ENCODE measurements at regions of chr14 and their contacts with region 1.

Region 1: DNA sequence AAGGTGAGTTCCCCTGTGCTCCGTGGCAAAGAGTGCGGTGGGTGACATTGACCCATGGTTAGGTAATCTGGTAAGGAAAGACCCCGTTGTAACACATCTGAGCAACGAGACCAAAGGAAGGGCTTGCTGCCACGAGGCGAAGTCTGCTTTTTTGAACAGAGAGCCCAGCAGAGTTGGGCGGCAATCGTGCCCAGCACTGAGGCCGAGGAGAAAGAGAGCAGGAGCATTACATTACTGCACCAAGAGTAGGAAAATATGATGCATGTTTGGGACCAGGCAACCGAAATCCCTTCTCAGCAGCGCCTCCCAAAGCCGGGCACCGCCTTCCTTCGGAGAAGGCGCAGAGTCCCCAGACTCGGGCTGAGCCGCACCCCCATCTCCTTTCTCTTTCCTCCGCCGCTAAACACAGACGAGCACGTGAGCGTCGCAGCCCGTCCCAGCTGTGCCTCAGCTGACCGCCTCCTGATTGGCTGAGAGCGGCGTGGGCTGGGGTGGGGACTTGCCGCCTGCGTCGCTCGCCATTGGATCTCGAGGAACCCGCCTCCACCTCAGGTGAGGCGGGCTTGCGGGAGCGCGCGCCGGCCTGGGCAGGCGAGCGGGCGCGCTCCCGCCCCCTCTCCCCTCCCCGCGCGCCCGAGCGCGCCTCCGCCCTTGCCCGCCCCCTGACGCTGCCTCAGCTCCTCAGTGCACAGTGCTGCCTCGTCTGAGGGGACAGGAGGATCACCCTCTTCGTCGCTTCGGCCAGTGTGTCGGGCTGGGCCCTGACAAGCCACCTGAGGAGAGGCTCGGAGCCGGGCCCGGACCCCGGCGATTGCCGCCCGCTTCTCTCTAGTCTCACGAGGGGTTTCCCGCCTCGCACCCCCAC is at the start of gene HIF1A:
- H3K4me3 Mint-ChIP-seq: peak within 1 kb of the TSS; percentile 97
- H3K27ac Mint-ChIP-seq: peak within 1 kb of the TSS; percentile 97
- H3K4me1 Mint-ChIP-seq: peaks cover 22% of the 10 kb centered on the region
- H3K27me3 Mint-ChIP-seq: peaks cover 1% of the 10 kb centered on the region

Region 2: DNA sequence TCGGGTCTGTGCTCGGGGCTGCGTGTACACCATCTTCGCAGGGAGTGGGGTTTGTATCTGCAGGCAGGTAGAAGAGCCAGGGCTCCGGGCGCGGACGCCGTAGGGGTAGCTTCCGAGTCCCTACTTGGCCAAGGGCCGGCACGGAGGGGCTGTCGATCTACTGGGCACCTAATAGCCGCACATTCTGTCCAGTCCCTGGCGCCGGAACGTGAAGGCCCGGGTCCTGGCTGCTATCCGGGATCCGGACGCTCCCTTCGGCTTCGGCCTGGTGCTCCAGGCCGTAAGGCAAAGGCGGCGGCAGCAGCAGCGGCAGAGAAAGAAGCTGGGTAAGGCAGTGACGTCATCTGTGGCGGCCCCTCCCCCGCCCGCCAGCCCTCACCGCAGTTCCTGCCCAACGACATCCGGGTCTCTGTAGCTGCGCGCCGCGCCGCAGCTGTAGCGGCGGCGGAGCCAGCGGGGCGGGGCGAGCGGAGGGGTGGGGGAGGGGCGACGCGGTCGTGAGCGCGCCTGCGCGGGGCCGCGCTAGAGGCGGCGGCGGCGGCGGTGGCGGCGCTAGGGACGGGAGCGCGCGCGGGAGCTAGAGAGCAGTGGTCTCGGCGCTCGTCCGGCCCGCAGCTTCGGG is 1446.3 kb before region 1 on chr14 and contains the start of gene PPM1A:
- intact Hi-C with region 1: loop called (anchors 5 kb)
- H3K4me3 Mint-ChIP-seq: peak within 1 kb of the TSS; percentile 92
- H3K27ac Mint-ChIP-seq: peak within 1 kb of the TSS; percentile 99
- H3K4me1 Mint-ChIP-seq: peaks cover 48% of the 10 kb centered on the region
- H3K27me3 Mint-ChIP-seq: no peaks in the 10 kb centered on the region

Region 3: GRCh38 chr14:61537563-61538463 is 157.2 kb before region 1 on chr14:
- intact Hi-C with region 1: no loop called
- H3K4me3 Mint-ChIP-seq: no peak overlapping the region
- H3K27ac Mint-ChIP-seq: peak overlapping the region; percentile 51
- H3K4me1 Mint-ChIP-seq: peaks cover 20% of the 10 kb centered on the region
- H3K27me3 Mint-ChIP-seq: no peaks in the 10 kb centered on the region

Region 4: DNA sequence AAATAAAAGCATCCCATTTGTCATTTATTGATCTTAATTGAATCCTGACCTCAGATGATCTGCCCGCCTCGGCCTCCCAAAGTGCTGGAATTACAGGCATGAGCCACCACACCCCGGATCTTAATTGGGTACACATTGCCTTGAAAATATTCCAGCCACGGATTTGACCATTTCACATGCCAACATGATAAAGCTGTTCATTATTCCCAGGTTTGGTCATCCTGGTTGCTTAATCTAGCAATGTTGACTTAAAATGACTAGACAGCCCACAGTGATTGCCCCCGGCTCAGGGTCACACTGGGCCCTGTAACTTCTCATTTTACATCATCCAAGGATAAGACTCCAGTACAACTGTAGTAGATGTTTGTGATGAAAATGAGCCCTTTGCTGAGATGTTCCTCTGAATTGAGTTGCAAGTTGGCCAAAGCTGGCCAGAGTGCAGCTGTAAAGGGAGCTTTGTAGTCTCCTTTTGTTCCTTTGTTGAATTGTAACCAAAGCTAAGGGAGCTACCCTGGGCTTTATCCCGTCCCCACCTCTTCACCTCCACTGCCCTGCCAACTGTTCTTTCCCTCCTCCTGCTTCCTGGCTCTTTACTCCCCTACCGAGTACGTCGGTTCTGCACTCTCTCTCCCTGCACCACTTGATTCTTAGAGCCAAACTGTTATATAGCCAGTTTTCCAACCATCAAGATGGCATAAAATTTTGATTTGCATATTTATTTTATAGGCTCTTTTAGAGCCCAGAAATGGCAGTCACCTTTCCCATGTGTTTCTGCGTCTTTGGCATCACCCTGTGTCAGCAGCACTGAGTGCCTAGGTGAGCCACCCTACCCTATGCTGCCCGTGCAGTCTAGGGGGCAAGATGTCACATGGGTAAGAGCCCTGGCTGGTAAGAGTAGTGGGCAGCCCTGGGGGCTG is 141.1 kb before region 1 on chr14:
- intact Hi-C with region 1: loop called (anchors 1 kb)
- H3K4me3 Mint-ChIP-seq: no peak overlapping the region
- H3K27ac Mint-ChIP-seq: peak overlapping the region; percentile 91
- H3K4me1 Mint-ChIP-seq: peaks cover 70% of the 10 kb centered on the region
- H3K27me3 Mint-ChIP-seq: no peaks in the 10 kb centered on the region

Region 5: GRCh38 chr14:61636779-61637178 is 58.3 kb before region 1 on chr14:
- intact Hi-C with region 1: loop called (anchors 2 kb)
- H3K4me3 Mint-ChIP-seq: no peak overlapping the region
- H3K27ac Mint-ChIP-seq: peak overlapping the region; percentile 82
- H3K4me1 Mint-ChIP-seq: peaks cover 29% of the 10 kb centered on the region
- H3K27me3 Mint-ChIP-seq: no peaks in the 10 kb centered on the region

Region 6: GRCh38 chr14:61750708-61751474 is 55.8 kb after region 1 on chr14:
- intact Hi-C with region 1: loop called (anchors 1 kb)
- H3K4me3 Mint-ChIP-seq: peak overlapping the region; percentile 92
- H3K27ac Mint-ChIP-seq: peak overlapping the region; percentile 90
- H3K4me1 Mint-ChIP-seq: peaks cover 33% of the 10 kb centered on the region
- H3K27me3 Mint-ChIP-seq: no peaks in the 10 kb centered on the region

Measured in dendritic cell treated with granulocyte-macrophage colony-stimulating factor and Interleukin-4, amounts not matched to agents 40 ng/mL and 50 ng/mL, for 4 days (primary cell).